ENCODE measurements at regions of chr7 and their contacts with region 1.

Region 1: GRCh38 chr7:102404005-102404861 is 8.1 kb downstream of the PRKRIP1 start:
- DNase-seq: peak; percentile 64 to 72 (median 65)
- H3K4me3 ChIP-seq: no peak overlapping the region
- H3K4me3 Mint-ChIP-seq: no peak overlapping the region
- H3K27ac ChIP-seq: no peak overlapping the region
- H3K27ac Mint-ChIP-seq: peak overlapping the region; percentile 27 to 79 (median 71)
- H3K4me1 ChIP-seq: no peaks in the 10 kb centered on the region
- H3K4me1 Mint-ChIP-seq: peaks cover 5 to 9% (median 7%) of the 10 kb centered on the region in 4 donors
- H3K27me3 ChIP-seq: no peaks in the 10 kb centered on the region
- H3K27me3 Mint-ChIP-seq: no peaks in the 10 kb centered on the region

Region 2: GRCh38 chr7:102425639-102426267 is 21.5 kb after region 1 on chr7:
- CTCF ChIA-PET with region 1: interaction called, 10 read pairs
- POLR2A ChIA-PET with region 1: interaction called, 496 read pairs
- intact Hi-C with region 1: no loop called
- DNase-seq: peak; percentile 80 to 94 (median 84)
- H3K4me3 ChIP-seq: peak overlapping the region; percentile 48 to 49
- H3K4me3 Mint-ChIP-seq: peak overlapping the region; percentile 83 to 92 (median 87)
- H3K27ac ChIP-seq: peak overlapping the region; percentile 98
- H3K27ac Mint-ChIP-seq: peak overlapping the region; percentile 100
- H3K4me1 ChIP-seq: peaks cover 83% of the 10 kb centered on the region
- H3K4me1 Mint-ChIP-seq: peaks cover 39 to 75% (median 56%) of the 10 kb centered on the region in 4 donors
- H3K27me3 ChIP-seq: no peaks in the 10 kb centered on the region
- H3K27me3 Mint-ChIP-seq: no peaks in the 10 kb centered on the region

Region 3: GRCh38 chr7:102433219-102434038 is 29.2 kb after region 1 on chr7 and contains the start of gene ORAI2:
- CTCF ChIA-PET with region 1: interaction called, 30 read pairs
- POLR2A ChIA-PET with region 1: interaction called, 496 read pairs
- intact Hi-C with region 1: no loop called
- DNase-seq: peak; percentile 81 to 86 (median 84)
- H3K4me3 ChIP-seq: peak within 1 kb of the TSS; percentile 74 to 76
- H3K4me3 Mint-ChIP-seq: peak within 1 kb of the TSS; percentile 80 to 90 (median 88)
- H3K27ac ChIP-seq: peak within 1 kb of the TSS; percentile 88
- H3K27ac Mint-ChIP-seq: peak within 1 kb of the TSS; percentile 98 to 100 (median 100)
- H3K4me1 ChIP-seq: peaks cover 61% of the 10 kb centered on the region
- H3K4me1 Mint-ChIP-seq: peaks cover 26 to 62% (median 43%) of the 10 kb centered on the region in 4 donors
- H3K27me3 ChIP-seq: no peaks in the 10 kb centered on the region
- H3K27me3 Mint-ChIP-seq: no peaks in the 10 kb centered on the region
- total RNA-seq, gene ORAI2: 29.0 to 31.6 TPM

Region 4: GRCh38 chr7:102456327-102456726 is 52.1 kb after region 1 on chr7:
- CTCF ChIA-PET with region 1: interaction called, 134 read pairs
- POLR2A ChIA-PET with region 1: interaction called, 4 read pairs
- intact Hi-C with region 1: no loop called
- DNase-seq: no peak
- H3K4me3 ChIP-seq: no peak overlapping the region
- H3K4me3 Mint-ChIP-seq: no peak overlapping the region
- H3K27ac ChIP-seq: no peak overlapping the region
- H3K27ac Mint-ChIP-seq: no peak overlapping the region
- H3K4me1 ChIP-seq: no peaks in the 10 kb centered on the region
- H3K4me1 Mint-ChIP-seq: peaks cover 0 to 6% (median 2%) of the 10 kb centered on the region in 4 donors
- H3K27me3 ChIP-seq: no peaks in the 10 kb centered on the region
- H3K27me3 Mint-ChIP-seq: no peaks in the 10 kb centered on the region

Region 5: DNA sequence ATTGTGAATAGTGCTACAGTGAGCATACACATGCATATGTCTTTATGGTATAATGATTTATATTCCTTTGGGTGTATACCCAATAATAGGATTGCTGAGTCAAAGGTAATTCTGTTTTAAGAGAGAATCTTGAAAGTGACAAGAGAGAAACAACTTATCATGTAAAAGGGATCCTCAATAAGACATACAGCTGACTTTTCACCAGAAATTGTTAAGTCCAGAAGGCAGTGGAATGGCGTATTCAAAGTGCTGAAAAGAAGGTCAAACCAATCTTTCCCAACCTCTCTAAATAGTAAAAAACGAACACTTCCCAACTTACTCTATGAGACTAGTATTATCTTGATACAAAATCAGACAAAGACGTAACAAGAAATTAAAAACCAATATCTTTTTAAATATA is 1984.0 kb after region 1 on chr7:
- CTCF ChIA-PET with region 1: no interaction called
- POLR2A ChIA-PET with region 1: no interaction called
- intact Hi-C with region 1: no loop called
- DNase-seq: no peak
- H3K4me3 ChIP-seq: no peak overlapping the region
- H3K4me3 Mint-ChIP-seq: no peak overlapping the region
- H3K27ac ChIP-seq: no peak overlapping the region
- H3K27ac Mint-ChIP-seq: no peak overlapping the region
- H3K4me1 ChIP-seq: no peaks in the 10 kb centered on the region
- H3K4me1 Mint-ChIP-seq: no peaks in the 10 kb centered on the region
- H3K27me3 ChIP-seq: no peaks in the 10 kb centered on the region
- H3K27me3 Mint-ChIP-seq: no peaks in the 10 kb centered on the region